IMR-90 (cell line): ENCODE measurements at regions of chr11 and their contacts with region 1.

Region 1: GRCh38 chr11:120446802-120447201 is 64.7 kb upstream of the GRIK4 start:
- DNase-seq: no peak
- ATAC-seq: no peak
- H3K4me3 ChIP-seq: no peak overlapping the region
- H3K27ac ChIP-seq: no peak overlapping the region
- H3K4me1 ChIP-seq: no peaks in the 10 kb centered on the region
- H3K27me3 ChIP-seq: no peaks in the 10 kb centered on the region
- CTCF ChIP-seq: no peak
- POLR2A ChIP-seq: no peak
- RAD21 ChIP-seq: no peak

Region 2: DNA sequence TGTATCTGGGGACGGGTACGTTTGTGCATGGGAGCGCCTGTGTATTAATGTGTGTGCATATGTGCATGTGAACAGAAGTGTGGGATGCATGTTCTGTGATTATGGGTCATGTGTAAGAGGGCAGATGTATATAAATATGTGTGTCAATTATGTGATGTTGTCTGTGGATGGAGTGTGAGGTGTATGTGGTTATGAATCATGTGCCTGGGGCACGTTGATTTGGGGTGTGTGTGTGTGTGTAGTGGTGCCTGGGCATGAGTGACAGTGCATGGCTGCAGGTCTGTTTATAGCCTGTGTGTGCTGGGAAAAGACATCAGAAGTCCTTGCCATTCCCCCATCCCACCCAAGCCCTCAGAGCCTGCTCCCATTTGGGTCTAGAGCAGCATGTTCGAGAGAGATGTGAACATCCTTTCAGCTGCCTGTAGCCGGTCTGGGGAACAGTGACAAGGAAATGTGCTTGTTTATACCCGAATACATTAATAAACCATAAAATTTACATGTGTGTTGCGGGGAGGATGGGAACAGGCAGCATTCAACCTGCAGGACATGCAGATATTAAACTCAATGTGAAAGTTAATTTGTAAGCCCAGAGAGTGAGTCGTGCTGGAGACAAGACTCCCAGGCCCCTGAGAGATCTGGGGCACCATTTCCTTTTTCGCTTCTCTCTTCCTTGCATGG is 846.8 kb before region 1 on chr11:
- CTCF ChIA-PET with region 1: no interaction called
- POLR2A ChIA-PET with region 1: no interaction called
- dilution Hi-C with region 1: no loop called
- in situ Hi-C with region 1: no loop called
- intact Hi-C with region 1: no loop called
- DNase-seq: peak; percentile 15
- ATAC-seq: no peak
- H3K4me3 ChIP-seq: no peak overlapping the region
- H3K27ac ChIP-seq: no peak overlapping the region
- H3K4me1 ChIP-seq: peaks cover 6% of the 10 kb centered on the region
- H3K27me3 ChIP-seq: peaks cover 3% of the 10 kb centered on the region; the same call in 1 of the 2 replicates
- CTCF ChIP-seq: no peak
- POLR2A ChIP-seq: no peak
- RAD21 ChIP-seq: no peak

Region 3: GRCh38 chr11:120462825-120463224 is 16.0 kb after region 1 on chr11:
- CTCF ChIA-PET with region 1: interaction called, 6 read pairs
- POLR2A ChIA-PET with region 1: no interaction called
- dilution Hi-C with region 1: no loop called
- in situ Hi-C with region 1: no loop called
- intact Hi-C with region 1: loop called (anchors 2 kb)
- DNase-seq: peak; percentile 35
- ATAC-seq: peak; percentile 96
- H3K4me3 ChIP-seq: no peak overlapping the region
- H3K27ac ChIP-seq: peak overlapping the region; percentile 57; the same call in 1 of the 2 replicates
- H3K4me1 ChIP-seq: no peaks in the 10 kb centered on the region; the same call in 1 of the 2 replicates
- H3K27me3 ChIP-seq: no peaks in the 10 kb centered on the region
- CTCF ChIP-seq: no peak
- POLR2A ChIP-seq: no peak
- RAD21 ChIP-seq: no peak